ENCODE measurements at regions of chr9 and their contacts with region 1.

Region 1: GRCh38 chr9:33076358-33077004 is at the start of gene SMU1:
- H3K4me3 ChIP-seq: peak within 1 kb of the TSS; percentile 75
- H3K27ac ChIP-seq: peak within 1 kb of the TSS; percentile 51
- H3K4me1 ChIP-seq: no peaks in the 10 kb centered on the region
- CTCF ChIP-seq: no peak

Region 2: GRCh38 chr9:33065157-33066076 is 11.1 kb before region 1 on chr9:
- CTCF ChIA-PET with region 1: interaction called, 4 read pairs
- POLR2A ChIA-PET with region 1: interaction called, 13 read pairs
- H3K4me3 ChIP-seq: no peak overlapping the region
- H3K27ac ChIP-seq: no peak overlapping the region
- H3K4me1 ChIP-seq: no peaks in the 10 kb centered on the region
- CTCF ChIP-seq: no peak

Region 3: DNA sequence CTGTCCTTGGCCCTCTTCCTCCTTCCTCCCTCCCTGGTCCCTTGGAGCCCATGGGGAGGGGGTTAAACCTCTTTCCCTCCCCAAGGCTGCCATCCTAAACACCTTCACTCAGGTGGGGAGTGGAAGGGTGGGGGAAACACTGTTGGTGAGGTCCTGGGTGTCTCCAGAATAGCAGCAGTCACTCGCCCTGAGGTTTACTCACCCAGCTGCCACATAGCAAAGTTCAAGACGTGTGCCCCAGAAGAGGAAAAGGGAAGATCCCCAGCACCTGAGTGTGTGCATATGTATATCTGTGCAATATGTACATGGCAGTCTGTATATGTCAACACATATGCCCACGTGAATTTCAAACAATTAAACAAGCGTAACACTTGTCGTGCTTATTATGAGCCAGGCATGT is 31.3 kb after region 1 on chr9:
- CTCF ChIA-PET with region 1: no interaction called
- POLR2A ChIA-PET with region 1: no interaction called
- H3K4me3 ChIP-seq: no peak overlapping the region
- H3K27ac ChIP-seq: no peak overlapping the region
- H3K4me1 ChIP-seq: no peaks in the 10 kb centered on the region
- CTCF ChIP-seq: no peak

Region 4: GRCh38 chr9:33225319-33226149 is 149.1 kb after region 1 on chr9:
- CTCF ChIA-PET with region 1: interaction called, 27 read pairs
- POLR2A ChIA-PET with region 1: interaction called, 3 read pairs
- H3K4me3 ChIP-seq: no peak overlapping the region
- H3K27ac ChIP-seq: no peak overlapping the region
- H3K4me1 ChIP-seq: no peaks in the 10 kb centered on the region
- CTCF ChIP-seq: 0 out of 2 replicates have a peak, but pooled peaks have one; percentile 22

Measured in HEK293 (cell line).